Endothelial cell of umbilical vein (primary cell): ENCODE measurements at regions of chr11 and their contacts with region 1.

Region 1: GRCh38 chr11:11787305-11788062 is 54.3 kb upstream of the USP47 start:
- DNase-seq: peak; percentile 66
- H3K4me3 ChIP-seq: no peak overlapping the region
- H3K27ac ChIP-seq: no peak overlapping the region
- H3K4me1 ChIP-seq: no peaks in the 10 kb centered on the region
- H3K27me3 ChIP-seq: peaks cover 0 to 5% of the 10 kb centered on the region in 2 experiments
- CTCF ChIP-seq: peak; percentile 69 to 73
- POLR2A ChIP-seq: no peak

Region 2: DNA sequence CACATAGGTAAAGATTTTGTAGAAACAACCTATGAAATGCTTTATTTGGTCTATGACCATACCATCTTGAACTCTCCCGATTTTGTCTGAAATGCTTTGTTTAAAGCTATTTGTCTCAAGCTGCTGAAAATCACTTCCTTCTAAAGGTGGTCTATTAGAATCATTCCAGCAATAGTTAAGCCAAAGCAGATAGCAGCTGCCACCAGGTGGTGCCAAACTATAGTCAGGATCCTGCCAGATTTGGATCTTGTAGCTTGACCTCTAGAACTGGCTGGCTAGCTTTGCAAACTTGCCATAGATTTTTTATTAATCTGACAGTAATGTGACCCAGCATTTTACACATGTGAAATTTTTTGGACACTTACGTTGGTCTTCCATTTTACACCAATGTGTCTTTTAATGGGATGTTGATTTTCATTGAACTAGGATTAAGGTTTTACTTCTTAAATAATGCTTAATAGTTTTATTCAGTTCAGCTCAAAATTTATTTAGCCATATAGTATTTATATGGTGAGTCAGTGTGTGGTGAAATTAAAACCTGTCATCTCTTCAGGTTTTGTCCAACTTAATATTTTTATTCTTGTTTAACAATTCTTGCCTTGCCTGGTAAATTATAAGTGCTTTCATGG is 1016.7 kb before region 1 on chr11:
- CTCF ChIA-PET with region 1: interaction called, 37 read pairs
- POLR2A ChIA-PET with region 1: no interaction called
- dilution Hi-C with region 1: no loop called
- intact Hi-C with region 1: loop called (anchors 1 kb)
- DNase-seq: peak; percentile 71
- H3K4me3 ChIP-seq: no peak overlapping the region
- H3K27ac ChIP-seq: no peak overlapping the region
- H3K4me1 ChIP-seq: no peaks in the 10 kb centered on the region
- H3K27me3 ChIP-seq: no peaks in the 10 kb centered on the region
- CTCF ChIP-seq: peak; percentile 69 to 75
- POLR2A ChIP-seq: no peak

Region 3: GRCh38 chr11:11028017-11028692 is 759.3 kb before region 1 on chr11:
- CTCF ChIA-PET with region 1: interaction called, 227 read pairs
- POLR2A ChIA-PET with region 1: no interaction called
- dilution Hi-C with region 1: no loop called
- intact Hi-C with region 1: loop called (anchors 1 kb)
- DNase-seq: peak; percentile 52
- H3K4me3 ChIP-seq: no peak overlapping the region
- H3K27ac ChIP-seq: no peak overlapping the region
- H3K4me1 ChIP-seq: peaks cover 8% of the 10 kb centered on the region
- H3K27me3 ChIP-seq: peaks cover 4 to 6% of the 10 kb centered on the region in 2 experiments
- CTCF ChIP-seq: peak; percentile 70 to 81
- POLR2A ChIP-seq: no peak

Region 4: GRCh38 chr11:11157185-11157584 is 630.3 kb before region 1 on chr11:
- CTCF ChIA-PET with region 1: interaction called, 3 read pairs
- POLR2A ChIA-PET with region 1: no interaction called
- dilution Hi-C with region 1: no loop called
- intact Hi-C with region 1: loop called (anchors 5 kb)
- DNase-seq: peak; percentile 6
- H3K4me3 ChIP-seq: no peak overlapping the region
- H3K27ac ChIP-seq: no peak overlapping the region
- H3K4me1 ChIP-seq: no peaks in the 10 kb centered on the region
- H3K27me3 ChIP-seq: no peaks in the 10 kb centered on the region
- CTCF ChIP-seq: peak in 1 of 2 donors; percentile 54
- POLR2A ChIP-seq: no peak

Region 5: GRCh38 chr11:11400635-11401232 is 386.8 kb before region 1 on chr11:
- CTCF ChIA-PET with region 1: interaction called, 3 read pairs
- POLR2A ChIA-PET with region 1: no interaction called
- dilution Hi-C with region 1: no loop called
- intact Hi-C with region 1: loop called (anchors 2 kb)
- DNase-seq: no peak
- H3K4me3 ChIP-seq: no peak overlapping the region
- H3K27ac ChIP-seq: no peak overlapping the region
- H3K4me1 ChIP-seq: no peaks in the 10 kb centered on the region
- H3K27me3 ChIP-seq: peaks cover under 1 to 10% of the 10 kb centered on the region in 2 experiments
- CTCF ChIP-seq: peak in 1 of 2 donors; percentile 20
- POLR2A ChIP-seq: no peak

Region 6: GRCh38 chr11:11798586-11799438 is 11.3 kb after region 1 on chr11:
- CTCF ChIA-PET with region 1: interaction called, 10 read pairs
- POLR2A ChIA-PET with region 1: no interaction called
- dilution Hi-C with region 1: no loop called
- intact Hi-C with region 1: no loop called
- DNase-seq: peak; percentile 76
- H3K4me3 ChIP-seq: no peak overlapping the region
- H3K27ac ChIP-seq: no peak overlapping the region
- H3K4me1 ChIP-seq: no peaks in the 10 kb centered on the region
- H3K27me3 ChIP-seq: peaks cover 24 to 28% of the 10 kb centered on the region in 2 experiments
- CTCF ChIP-seq: peak; percentile 86 to 87
- POLR2A ChIP-seq: no peak